GM12878 (cell line): ENCODE measurements at regions of chr1 and their contacts with region 1.

Region 1: GRCh38 chr1:207963427-207964194 is 52.7 kb upstream of the CD34 start:
- DNase-seq: peak; percentile 38
- ATAC-seq: peak; percentile 96
- H3K4me3 ChIP-seq: peak overlapping the region; percentile 58
- H3K27ac ChIP-seq: peak overlapping the region; percentile 58
- H3K4me1 ChIP-seq: peaks cover 4% of the 10 kb centered on the region; the same call in 1 of the 2 replicates
- H3K27me3 ChIP-seq: peaks cover 5 to 14% of the 10 kb centered on the region in 2 experiments
- CTCF ChIP-seq: peak; percentile 88 to 100 (median 94); a peak in 5 of 6 replicates
- EP300 ChIP-seq: no peak
- POLR2A ChIP-seq: peak; percentile 94
- RAD21 ChIP-seq: peak; percentile 89

Region 2: DNA sequence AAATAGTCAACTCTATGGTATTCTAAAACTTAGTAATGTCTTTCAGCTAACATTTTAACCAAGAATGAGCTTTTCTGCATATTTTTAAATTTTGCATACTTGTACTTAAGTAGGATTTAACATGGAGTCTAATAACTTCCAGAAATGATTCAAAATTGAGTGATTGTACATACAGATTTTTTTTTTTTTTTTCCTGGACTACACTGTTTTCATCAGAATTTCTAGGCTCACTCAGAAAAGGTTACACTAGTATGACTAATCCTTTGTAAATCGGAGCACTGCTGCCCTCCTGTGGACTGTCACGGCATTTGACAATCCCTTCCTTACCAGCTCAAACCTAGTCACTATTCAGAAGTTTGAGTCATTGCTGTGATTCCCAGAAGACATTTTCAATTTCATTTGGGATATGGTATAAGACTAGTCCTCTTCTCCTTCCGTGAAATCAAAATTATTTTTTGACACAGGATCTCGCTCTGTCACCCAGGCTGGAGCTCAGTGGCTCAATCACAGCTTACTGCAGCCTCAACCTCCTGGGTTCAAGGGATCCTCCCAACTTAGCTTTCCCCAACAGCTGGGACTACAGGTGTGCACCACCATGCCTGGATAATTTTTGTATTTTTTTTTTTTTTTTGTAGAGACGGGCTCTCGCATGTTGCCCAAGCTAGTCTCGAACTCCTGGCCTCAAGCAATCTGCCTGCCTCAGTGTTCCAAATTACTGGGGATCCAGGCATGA is 166.2 kb before region 1 on chr1:
- CTCF ChIA-PET with region 1: interaction called, 8 read pairs
- POLR2A ChIA-PET with region 1: no interaction called
- RAD21 ChIA-PET with region 1: interaction called, 15 read pairs
- SMC1A ChIA-PET with region 1: interaction called, 5 read pairs
- in situ Hi-C with region 1: no loop called
- intact Hi-C with region 1: no loop called
- DNase-seq: peak; percentile 38
- ATAC-seq: peak; percentile 84
- H3K4me3 ChIP-seq: no peak overlapping the region
- H3K27ac ChIP-seq: no peak overlapping the region
- H3K4me1 ChIP-seq: peaks cover 15% of the 10 kb centered on the region
- H3K27me3 ChIP-seq: no peaks in the 10 kb centered on the region
- CTCF ChIP-seq: peak; percentile 78 to 83 (median 80)
- EP300 ChIP-seq: no peak
- POLR2A ChIP-seq: no peak
- RAD21 ChIP-seq: peak; percentile 71

Region 3: GRCh38 chr1:207828485-207829158 is 135.0 kb before region 1 on chr1:
- CTCF ChIA-PET with region 1: interaction called, 25 read pairs
- POLR2A ChIA-PET with region 1: interaction called, 4 read pairs
- RAD21 ChIA-PET with region 1: interaction called, 25 read pairs
- SMC1A ChIA-PET with region 1: interaction called, 15 read pairs
- in situ Hi-C with region 1: loop called (anchors 10 kb)
- intact Hi-C with region 1: loop called (anchors 1 kb)
- DNase-seq: peak; percentile 81
- ATAC-seq: peak; percentile 37
- H3K4me3 ChIP-seq: no peak overlapping the region
- H3K27ac ChIP-seq: peak overlapping the region; percentile 10
- H3K4me1 ChIP-seq: peaks cover 64% of the 10 kb centered on the region
- H3K27me3 ChIP-seq: no peaks in the 10 kb centered on the region
- CTCF ChIP-seq: peak; percentile 83 to 95 (median 93)
- EP300 ChIP-seq: no peak
- POLR2A ChIP-seq: no peak
- RAD21 ChIP-seq: peak; percentile 96

Region 4: DNA sequence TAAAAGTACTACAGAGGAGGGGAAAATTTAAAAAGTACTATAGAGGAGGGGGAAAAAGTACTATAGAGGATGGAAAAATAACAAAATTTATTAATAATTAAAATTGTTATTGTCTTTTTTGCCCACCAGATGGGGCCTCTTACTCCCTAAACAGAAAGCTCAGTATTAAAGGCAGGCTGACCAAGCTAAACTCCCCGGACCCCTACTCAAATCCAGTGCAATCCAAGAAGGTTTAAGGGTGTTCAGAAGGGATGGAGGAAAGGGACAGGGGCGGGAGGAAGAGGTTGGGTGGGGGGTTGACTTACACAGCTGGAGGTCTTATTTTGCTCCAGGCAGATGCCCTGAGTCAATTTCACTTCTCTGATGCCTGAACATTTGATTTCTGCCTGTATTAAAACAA is 66.4 kb before region 1 on chr1:
- CTCF ChIA-PET with region 1: interaction called, 144 read pairs
- POLR2A ChIA-PET with region 1: interaction called, 3 read pairs
- RAD21 ChIA-PET with region 1: interaction called, 75 read pairs
- SMC1A ChIA-PET with region 1: interaction called, 76 read pairs
- in situ Hi-C with region 1: loop called (anchors 5 kb)
- intact Hi-C with region 1: loop called (anchors 1 kb)
- DNase-seq: no peak
- ATAC-seq: peak; percentile 43
- H3K4me3 ChIP-seq: no peak overlapping the region
- H3K27ac ChIP-seq: no peak overlapping the region
- H3K4me1 ChIP-seq: no peaks in the 10 kb centered on the region; the same call in 1 of the 2 replicates
- H3K27me3 ChIP-seq: peaks cover 0 to 2% of the 10 kb centered on the region in 2 experiments; a peak in 1 of 4 replicates
- CTCF ChIP-seq: peak in 2 of 3 experiments; percentile 29 to 39; a peak in 4 of 6 replicates
- EP300 ChIP-seq: no peak
- POLR2A ChIP-seq: no peak
- RAD21 ChIP-seq: peak; percentile 53

Region 5: DNA sequence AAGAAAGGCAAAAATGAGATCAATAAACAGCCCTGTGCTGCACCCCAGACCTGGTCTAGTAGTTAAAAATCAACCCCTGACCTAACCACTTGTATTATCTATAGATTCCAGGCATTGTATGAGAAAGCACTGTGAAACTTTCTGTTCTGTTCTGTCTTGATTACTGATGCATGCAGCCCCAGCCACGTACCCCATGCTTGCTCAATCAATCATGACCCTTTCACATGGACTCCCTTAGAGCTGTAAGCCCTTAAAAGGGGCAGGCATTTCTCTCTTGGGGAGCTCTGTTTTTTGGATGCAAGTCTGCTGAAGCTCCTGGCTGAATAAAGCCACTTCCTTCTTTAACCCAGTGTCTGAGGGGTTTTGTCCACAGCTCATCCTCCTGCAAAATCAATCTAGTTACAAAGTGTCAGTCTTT is 28.4 kb before region 1 on chr1:
- CTCF ChIA-PET with region 1: interaction called, 27 read pairs
- POLR2A ChIA-PET with region 1: interaction called, 4 read pairs
- RAD21 ChIA-PET with region 1: interaction called, 13 read pairs
- SMC1A ChIA-PET with region 1: interaction called, 9 read pairs
- in situ Hi-C with region 1: no loop called
- intact Hi-C with region 1: no loop called
- DNase-seq: peak; percentile 87
- ATAC-seq: peak; percentile 99
- H3K4me3 ChIP-seq: no peak overlapping the region
- H3K27ac ChIP-seq: no peak overlapping the region
- H3K4me1 ChIP-seq: peaks cover 5% of the 10 kb centered on the region; the same call in 1 of the 2 replicates
- H3K27me3 ChIP-seq: no peaks in the 10 kb centered on the region; a peak in 1 of 4 replicates
- CTCF ChIP-seq: no peak
- EP300 ChIP-seq: peak; percentile 53 to 63; a peak in 1 of 4 replicates
- POLR2A ChIP-seq: no peak
- RAD21 ChIP-seq: no peak

Region 6: DNA sequence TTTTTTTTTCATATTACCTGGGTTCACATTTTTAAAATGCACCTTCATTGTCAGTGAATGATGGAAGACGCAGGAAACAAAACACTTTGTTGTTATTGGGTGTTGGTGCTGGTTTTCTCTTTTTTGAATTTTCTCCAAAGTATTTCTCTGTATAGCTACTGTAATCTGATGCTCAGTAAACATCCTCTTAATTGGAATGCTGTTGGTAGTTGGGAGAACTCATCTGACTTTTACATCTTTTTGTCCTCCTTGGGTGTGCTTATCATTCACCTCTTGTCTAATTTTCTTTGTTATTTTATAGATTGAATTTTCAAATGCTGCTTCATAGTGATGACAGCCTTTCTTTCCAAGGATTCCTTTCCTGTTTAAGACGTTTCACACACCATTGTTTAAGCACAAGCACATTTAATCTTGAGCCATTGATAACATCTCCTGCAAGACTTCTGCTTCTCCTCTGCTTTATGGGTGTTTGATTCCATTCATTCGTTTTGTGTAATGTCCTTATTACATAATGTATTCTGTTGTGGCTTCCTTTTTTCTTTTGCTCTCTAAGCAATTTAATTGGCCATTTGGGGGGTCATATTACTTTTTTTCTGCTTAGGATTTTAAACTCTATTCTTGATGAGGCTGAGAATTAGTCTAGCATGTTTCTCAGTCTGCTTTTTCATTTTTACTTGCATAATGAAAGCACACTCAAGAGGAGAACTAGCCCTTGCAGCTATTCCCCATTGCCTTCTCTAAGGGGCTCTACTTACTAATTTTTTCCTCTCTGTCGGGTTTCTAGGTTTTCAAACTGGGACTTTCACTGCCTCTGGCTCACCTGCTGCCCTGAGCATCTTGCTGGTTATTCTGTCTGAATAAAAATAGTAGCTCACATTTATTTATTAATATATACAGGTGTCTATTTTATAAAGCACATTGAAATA is 10.7 kb before region 1 on chr1:
- CTCF ChIA-PET with region 1: interaction called, 11 read pairs
- POLR2A ChIA-PET with region 1: no interaction called
- RAD21 ChIA-PET with region 1: interaction called, 8 read pairs
- SMC1A ChIA-PET with region 1: interaction called, 9 read pairs
- in situ Hi-C with region 1: no loop called
- intact Hi-C with region 1: no loop called
- DNase-seq: no peak
- ATAC-seq: peak; percentile 53
- H3K4me3 ChIP-seq: no peak overlapping the region
- H3K27ac ChIP-seq: no peak overlapping the region
- H3K4me1 ChIP-seq: no peaks in the 10 kb centered on the region
- H3K27me3 ChIP-seq: peaks cover 5 to 9% of the 10 kb centered on the region in 2 experiments
- CTCF ChIP-seq: no peak
- EP300 ChIP-seq: no peak
- POLR2A ChIP-seq: no peak
- RAD21 ChIP-seq: no peak